HepG2 (cell line): ENCODE measurements at regions of chr3 and their contacts with region 1.

Region 1: DNA sequence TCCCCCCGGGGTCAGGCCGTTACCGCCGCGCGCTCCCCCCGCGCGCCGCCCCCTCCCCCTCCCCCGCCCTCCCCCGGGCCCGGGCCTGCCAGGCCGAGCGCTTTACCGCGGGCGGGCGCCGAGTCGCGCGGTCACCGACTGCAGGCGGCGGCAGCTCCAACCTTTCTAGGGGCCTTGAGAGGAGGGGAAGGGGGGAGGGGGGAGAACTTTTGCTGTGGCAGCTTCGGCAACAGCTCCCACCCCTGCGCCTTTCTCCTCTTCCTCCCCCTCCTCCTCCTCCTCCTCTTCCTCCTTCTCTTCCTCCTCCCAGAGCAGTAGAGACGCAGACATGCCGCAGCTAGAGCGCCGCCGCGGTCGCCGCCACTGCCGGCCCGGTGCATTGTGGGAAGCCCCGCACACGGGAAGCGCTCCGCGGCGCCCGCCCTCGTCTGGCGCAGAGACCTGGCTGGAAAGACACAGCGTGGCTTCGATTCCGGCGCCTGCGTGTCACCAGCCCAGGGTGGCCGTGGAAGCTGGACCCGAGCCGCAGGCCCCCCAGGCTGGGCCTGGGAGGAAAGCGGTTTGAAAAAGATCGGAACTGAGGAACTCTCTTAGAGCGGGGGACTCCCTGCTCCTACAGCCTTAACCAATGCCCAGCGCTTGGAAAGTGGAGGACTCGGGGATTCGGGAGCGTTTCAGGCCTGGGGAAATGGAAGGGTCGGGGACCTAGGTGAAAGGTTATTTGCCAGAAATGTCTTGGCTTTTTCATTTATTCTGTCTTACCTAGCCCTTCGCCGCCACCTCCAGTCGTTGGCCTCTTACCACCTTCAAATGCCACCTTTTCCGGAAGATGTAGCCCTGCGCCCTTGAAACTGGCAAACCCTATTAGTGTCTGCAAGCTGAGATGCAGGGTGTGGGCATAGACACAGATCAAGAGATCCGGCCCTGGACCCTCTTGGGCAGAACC is at the start of gene ZNF148:
- DNase-seq: peak; percentile 83
- ATAC-seq: peak; percentile 87
- H3K4me3 ChIP-seq: peak within 1 kb of the TSS; percentile 88 to 100 (median 90)
- H3K27ac ChIP-seq: peak within 1 kb of the TSS; percentile 97
- H3K4me1 ChIP-seq: peaks cover 64% of the 10 kb centered on the region
- H3K27me3 ChIP-seq: peaks cover 0 to 5% of the 10 kb centered on the region in 2 experiments; a peak in 1 of 5 replicates
- CTCF ChIP-seq: peak; percentile 39; the same call in 1 of the 2 replicates
- EP300 ChIP-seq: peak; percentile 52 to 63
- POLR2A ChIP-seq: peak; percentile 85 to 93
- RAD21 ChIP-seq: peak; percentile 61
- total RNA-seq, gene ZNF148: 33.9 and 36.1 TPM in 2 replicates

Region 2: DNA sequence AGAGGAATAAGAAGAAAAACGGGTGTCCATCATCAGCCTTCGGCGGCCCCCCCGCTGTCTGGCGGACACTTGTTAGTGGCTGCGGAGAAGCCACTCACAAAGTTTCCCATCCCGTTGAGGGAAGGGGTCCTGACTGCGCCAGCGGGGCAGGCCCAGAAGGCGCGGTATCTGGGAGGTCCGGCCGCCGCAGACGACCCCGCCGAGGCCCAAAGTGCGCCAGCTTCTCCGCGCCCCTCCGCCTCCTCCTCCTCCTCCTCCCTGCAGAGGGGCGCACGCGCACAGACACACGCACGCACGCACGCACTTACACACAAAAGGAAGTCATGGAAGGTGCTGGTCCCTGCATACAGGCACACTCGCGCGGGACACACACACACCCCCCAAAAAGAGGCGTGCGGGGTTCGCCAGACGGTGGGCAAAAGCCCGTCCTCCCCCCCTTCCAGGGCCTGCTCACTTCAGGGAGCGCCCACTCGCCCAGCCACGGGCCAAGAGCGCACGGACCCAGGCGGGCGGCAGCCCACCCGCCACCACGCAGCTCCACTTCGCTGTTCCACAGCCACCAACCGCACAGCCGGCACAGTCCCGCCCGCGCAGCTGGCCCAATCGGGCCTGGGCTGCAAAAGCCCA is 18.1 kb before region 1 on chr3:
- CTCF ChIA-PET with region 1: no interaction called
- POLR2A ChIA-PET with region 1: interaction called, 19 read pairs
- in situ Hi-C with region 1: no loop called
- intact Hi-C with region 1: no loop called
- DNase-seq: peak; percentile 58
- ATAC-seq: peak; percentile 98
- H3K4me3 ChIP-seq: peak overlapping the region; percentile 69 to 88 (median 83)
- H3K27ac ChIP-seq: peak overlapping the region; percentile 74
- H3K4me1 ChIP-seq: peaks cover 41% of the 10 kb centered on the region
- H3K27me3 ChIP-seq: no peaks in the 10 kb centered on the region
- CTCF ChIP-seq: no peak
- EP300 ChIP-seq: no peak
- POLR2A ChIP-seq: peak; percentile 60 to 86
- RAD21 ChIP-seq: peak; percentile 14; the same call in 1 of the 2 replicates

Region 3: GRCh38 chr3:125437631-125438435 is 62.6 kb after region 1 on chr3:
- CTCF ChIA-PET with region 1: no interaction called
- POLR2A ChIA-PET with region 1: interaction called, 13 read pairs
- in situ Hi-C with region 1: no loop called
- intact Hi-C with region 1: loop called (anchors 5 kb)
- DNase-seq: peak; percentile 32
- ATAC-seq: peak; percentile 39
- H3K4me3 ChIP-seq: peak overlapping the region; percentile 7 to 58 (median 47); a peak in 5 of 6 replicates
- H3K27ac ChIP-seq: peak overlapping the region; percentile 43
- H3K4me1 ChIP-seq: peaks cover 54% of the 10 kb centered on the region
- H3K27me3 ChIP-seq: no peaks in the 10 kb centered on the region; a peak in 1 of 5 replicates
- CTCF ChIP-seq: peak; percentile 84
- EP300 ChIP-seq: no peak
- POLR2A ChIP-seq: no peak
- RAD21 ChIP-seq: peak; percentile 79

Region 4: DNA sequence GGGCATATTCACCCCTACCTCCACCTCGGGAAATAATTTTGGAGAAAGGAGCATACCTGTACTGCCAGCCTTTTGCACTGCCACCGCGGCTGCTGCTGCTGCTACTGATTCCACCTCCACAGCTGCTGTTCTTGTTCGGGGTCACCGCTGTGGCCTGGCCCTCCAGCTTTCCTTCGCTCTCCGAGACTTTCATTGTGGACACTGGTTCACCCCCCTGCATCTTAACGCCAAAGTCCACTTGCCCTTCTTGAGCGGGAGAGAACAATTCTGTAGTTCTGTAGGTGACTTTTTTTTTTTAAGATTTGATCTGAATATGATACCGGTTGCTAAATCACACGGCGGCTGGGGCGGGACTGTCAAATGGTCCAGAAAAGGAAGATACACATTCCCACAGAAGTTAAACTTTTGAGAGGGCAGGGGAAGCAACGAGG is 219.3 kb after region 1 on chr3:
- CTCF ChIA-PET with region 1: no interaction called
- POLR2A ChIA-PET with region 1: interaction called, 3 read pairs
- in situ Hi-C with region 1: no loop called
- intact Hi-C with region 1: loop called (anchors 5 kb)
- DNase-seq: no peak
- ATAC-seq: 0 out of 3 replicates have a peak, but pooled peaks have one; percentile 7
- H3K4me3 ChIP-seq: peak overlapping the region; percentile 84 to 96 (median 85)
- H3K27ac ChIP-seq: peak overlapping the region; percentile 97
- H3K4me1 ChIP-seq: peaks cover 43% of the 10 kb centered on the region
- H3K27me3 ChIP-seq: no peaks in the 10 kb centered on the region; a peak in 1 of 5 replicates
- CTCF ChIP-seq: no peak
- EP300 ChIP-seq: no peak
- POLR2A ChIP-seq: no peak
- RAD21 ChIP-seq: no peak

Region 5: DNA sequence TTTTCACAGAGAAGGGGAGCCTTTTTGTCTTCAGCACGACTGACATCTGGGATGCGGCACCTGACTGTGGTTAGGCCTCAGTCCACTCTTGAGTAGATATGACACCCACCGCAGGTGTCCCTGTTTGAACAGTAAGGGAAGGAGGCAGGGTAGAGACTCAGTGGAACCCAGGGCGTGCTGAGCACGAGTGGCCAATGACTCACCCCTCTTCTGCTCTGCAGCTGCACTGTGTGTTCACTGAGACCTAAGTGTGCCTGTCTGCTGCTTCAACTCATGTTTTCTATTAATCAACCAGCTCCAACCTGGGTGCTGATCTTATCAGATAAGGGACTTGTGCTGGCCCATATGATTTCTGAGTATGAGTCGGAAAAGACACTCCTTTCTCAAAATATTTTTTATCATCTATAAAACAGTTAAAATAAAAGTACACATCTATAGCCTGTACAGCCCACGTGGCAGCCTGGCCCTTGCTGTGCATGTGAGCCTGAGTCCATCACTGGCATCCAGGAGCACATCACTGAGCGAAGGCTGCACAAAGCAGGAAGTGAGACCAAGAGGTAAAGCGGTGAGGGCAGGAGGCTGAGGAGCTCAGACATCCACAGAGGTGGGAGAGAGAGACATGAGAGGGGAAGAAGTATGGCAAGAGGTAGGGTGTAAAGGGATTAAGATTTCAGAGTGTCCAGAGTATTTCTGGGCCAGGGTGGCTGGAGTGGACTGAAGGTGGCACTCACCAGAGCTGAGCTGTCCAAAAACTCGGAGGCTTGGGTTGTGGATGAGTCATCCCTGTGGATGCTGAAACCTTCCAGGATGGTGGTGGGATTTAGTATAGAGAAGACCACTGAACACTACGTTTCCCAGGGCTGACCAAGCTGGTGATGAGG is 659.5 kb after region 1 on chr3:
- CTCF ChIA-PET with region 1: no interaction called
- POLR2A ChIA-PET with region 1: no interaction called
- in situ Hi-C with region 1: no loop called
- intact Hi-C with region 1: no loop called
- DNase-seq: no peak
- ATAC-seq: no peak
- H3K4me3 ChIP-seq: no peak overlapping the region
- H3K27ac ChIP-seq: no peak overlapping the region
- H3K4me1 ChIP-seq: no peaks in the 10 kb centered on the region
- H3K27me3 ChIP-seq: no peaks in the 10 kb centered on the region
- CTCF ChIP-seq: no peak
- EP300 ChIP-seq: no peak
- POLR2A ChIP-seq: no peak
- RAD21 ChIP-seq: no peak